ENCODE measurements at regions of chr13 and their contacts with region 1.

Region 1: DNA sequence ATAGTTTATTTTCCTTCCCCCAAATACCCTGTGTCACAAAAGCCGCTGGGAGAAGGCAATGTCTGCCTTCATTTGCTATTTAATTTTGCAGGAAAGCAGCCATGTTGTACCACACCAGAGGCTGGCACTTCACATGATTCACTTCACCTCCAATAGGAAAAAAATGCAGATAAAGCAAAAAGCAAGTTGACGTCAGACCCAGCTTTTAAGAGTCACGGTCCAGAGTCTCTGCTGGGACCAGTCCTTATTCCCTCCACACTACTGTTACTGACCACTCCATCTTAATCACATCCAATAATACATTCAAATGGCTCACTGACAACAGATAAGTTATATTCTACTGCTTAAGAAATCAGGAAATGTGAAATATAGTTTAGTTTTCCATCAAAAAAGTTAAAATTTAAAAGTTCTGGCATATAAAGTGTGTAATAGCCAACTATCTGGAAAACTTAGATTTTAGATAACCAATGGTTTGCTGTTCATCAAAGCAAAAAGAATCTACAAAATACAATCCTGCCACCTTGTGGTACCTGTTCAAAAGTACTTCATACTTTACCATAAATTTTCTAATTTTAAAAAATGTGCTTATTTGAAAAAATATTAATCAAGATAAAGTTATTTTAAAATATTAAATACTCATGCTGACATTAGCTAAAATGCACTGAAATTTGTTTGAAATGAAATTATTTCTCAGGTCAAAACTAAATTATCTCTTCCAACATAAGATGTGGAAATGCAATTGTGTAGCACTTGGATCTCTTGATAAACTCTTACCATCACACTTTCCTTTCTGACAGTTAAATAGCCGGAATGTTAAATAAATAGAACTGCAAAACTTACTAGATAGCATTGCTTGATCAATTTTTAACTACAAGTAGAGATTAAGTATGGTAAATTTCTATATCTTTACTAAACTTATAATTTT is 97.3 kb downstream of the SERP2 start:
- DNase-seq: no peak
- H3K4me3 ChIP-seq: no peak overlapping the region
- H3K27ac ChIP-seq: peak overlapping the region in 1 of 2 donors; percentile 5
- H3K4me1 ChIP-seq: peaks cover 0 to 59% (median 11%) of the 10 kb centered on the region in 4 donors
- H3K27me3 ChIP-seq: no peaks in the 10 kb centered on the region
- CTCF ChIP-seq: peak; percentile 51 to 53

Region 2: DNA sequence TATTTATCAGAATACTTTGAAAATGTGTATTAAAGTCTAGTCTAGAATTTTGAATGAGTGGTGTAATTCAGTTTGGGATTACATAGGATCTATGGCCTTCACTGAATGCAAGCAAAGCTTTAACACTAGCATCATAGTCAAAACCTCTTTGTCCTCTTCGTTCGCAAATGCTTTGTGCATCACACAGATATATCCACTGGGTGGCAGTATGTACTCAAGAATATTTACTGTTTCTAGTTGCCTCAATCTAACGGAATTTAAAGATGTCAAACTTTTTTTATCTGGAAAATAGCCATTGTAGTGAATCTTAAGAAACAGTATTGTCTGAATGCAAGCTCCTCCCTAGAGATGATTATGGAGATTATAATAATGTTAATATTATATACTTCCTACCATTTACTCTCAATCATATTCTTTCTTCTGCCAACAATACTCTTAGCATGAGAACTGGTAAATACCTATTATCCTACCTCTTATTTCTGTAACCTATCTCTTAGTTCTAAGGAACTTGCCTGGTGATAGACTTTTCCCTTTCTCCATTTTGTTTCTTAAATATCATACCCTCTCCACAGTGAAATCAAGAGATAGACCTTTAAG is 565.4 kb before region 1 on chr13:
- intact Hi-C with region 1: loop called (anchors 10 kb)
- DNase-seq: peak in 1 of 2 donors; percentile 26
- H3K4me3 ChIP-seq: no peak overlapping the region
- H3K27ac ChIP-seq: no peak overlapping the region
- H3K4me1 ChIP-seq: peaks cover 0 to 11% (median 5%) of the 10 kb centered on the region in 4 donors
- H3K27me3 ChIP-seq: no peaks in the 10 kb centered on the region
- CTCF ChIP-seq: peak; percentile 79 to 90